PC-9 (cell line): ENCODE measurements at regions of chr9 and their contacts with region 1.

Region 1: GRCh38 chr9:133782157-133783130 is 44.3 kb upstream of the SARDH start:
- DNase-seq: peak; percentile 42 to 76
- H3K4me3 ChIP-seq: no peak overlapping the region
- H3K27ac ChIP-seq: no peak overlapping the region
- H3K4me1 ChIP-seq: peaks cover 8% of the 10 kb centered on the region; the same call in 1 of the 2 replicates
- H3K27me3 ChIP-seq: no peaks in the 10 kb centered on the region
- CTCF ChIP-seq: peak; percentile 85

Region 2: GRCh38 chr9:133676450-133676849 is 106.0 kb before region 1 on chr9:
- CTCF ChIA-PET with region 1: interaction called, 14 read pairs
- POLR2A ChIA-PET with region 1: no interaction called
- intact Hi-C with region 1: no loop called
- DNase-seq: no peak
- H3K4me3 ChIP-seq: no peak overlapping the region
- H3K27ac ChIP-seq: no peak overlapping the region
- H3K4me1 ChIP-seq: no peaks in the 10 kb centered on the region
- H3K27me3 ChIP-seq: peaks cover 100% of the 10 kb centered on the region
- CTCF ChIP-seq: no peak

Region 3: GRCh38 chr9:134099123-134099787 is 316.8 kb after region 1 on chr9:
- CTCF ChIA-PET with region 1: interaction called, 8 read pairs
- POLR2A ChIA-PET with region 1: no interaction called
- intact Hi-C with region 1: loop called (anchors 5 kb)
- DNase-seq: peak; percentile 61 to 66
- H3K4me3 ChIP-seq: no peak overlapping the region
- H3K27ac ChIP-seq: no peak overlapping the region
- H3K4me1 ChIP-seq: no peaks in the 10 kb centered on the region
- H3K27me3 ChIP-seq: peaks cover 79% of the 10 kb centered on the region
- CTCF ChIP-seq: peak; percentile 91